Heart left ventricle (tissue), 16 donors: ENCODE measurements at regions of chr17 and their contacts with region 1.

Region 1: GRCh38 chr17:36629252-36629847 is 28.0 kb downstream of the MRM1 start:
- DNase-seq: peak; percentile 65 to 87 (median 69)
- ATAC-seq: peak; percentile 60 to 92 (median 88)
- H3K4me3 ChIP-seq: no peak overlapping the region
- H3K27ac ChIP-seq: no peak overlapping the region
- H3K4me1 ChIP-seq: peaks cover 0 to 12% (median 0%) of the 10 kb centered on the region in 12 donors
- H3K27me3 ChIP-seq: peaks cover 0 to 10% (median 4%) of the 10 kb centered on the region in 9 donors
- CTCF ChIP-seq: peak; percentile 93 to 99 (median 98)
- POLR2A ChIP-seq: no peak

Region 2: DNA sequence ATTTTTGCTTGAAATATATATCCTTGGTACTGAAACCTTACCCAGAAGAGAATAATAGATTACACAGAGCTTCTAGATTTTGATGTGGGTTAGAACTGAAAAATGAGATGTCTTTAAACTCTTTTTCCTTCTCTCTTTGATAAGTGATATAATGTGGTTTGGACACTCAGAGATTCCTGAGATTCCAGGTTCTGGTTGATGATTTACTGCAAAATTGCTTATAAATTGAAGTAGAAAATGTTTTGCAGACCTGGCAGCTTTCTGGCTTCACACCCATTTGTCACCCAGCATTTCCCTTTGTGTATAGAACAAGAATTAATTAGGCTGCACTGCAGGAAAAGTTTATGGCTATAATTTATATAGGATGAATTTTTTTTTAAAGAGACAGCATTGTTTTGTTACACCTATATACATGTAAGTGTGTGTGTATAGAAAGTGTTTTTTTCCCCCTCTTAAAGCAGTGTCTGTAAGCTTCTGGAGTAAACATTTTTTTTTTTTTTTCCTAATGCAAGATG is 342.9 kb after region 1 on chr17:
- intact Hi-C with region 1: no loop called
- DNase-seq: no peak
- ATAC-seq: no peak
- H3K4me3 ChIP-seq: no peak overlapping the region
- H3K27ac ChIP-seq: no peak overlapping the region
- H3K4me1 ChIP-seq: peaks cover 0 to 7% (median 0%) of the 10 kb centered on the region in 12 donors
- H3K27me3 ChIP-seq: no peaks in the 10 kb centered on the region
- CTCF ChIP-seq: no peak
- POLR2A ChIP-seq: no peak

Region 3: DNA sequence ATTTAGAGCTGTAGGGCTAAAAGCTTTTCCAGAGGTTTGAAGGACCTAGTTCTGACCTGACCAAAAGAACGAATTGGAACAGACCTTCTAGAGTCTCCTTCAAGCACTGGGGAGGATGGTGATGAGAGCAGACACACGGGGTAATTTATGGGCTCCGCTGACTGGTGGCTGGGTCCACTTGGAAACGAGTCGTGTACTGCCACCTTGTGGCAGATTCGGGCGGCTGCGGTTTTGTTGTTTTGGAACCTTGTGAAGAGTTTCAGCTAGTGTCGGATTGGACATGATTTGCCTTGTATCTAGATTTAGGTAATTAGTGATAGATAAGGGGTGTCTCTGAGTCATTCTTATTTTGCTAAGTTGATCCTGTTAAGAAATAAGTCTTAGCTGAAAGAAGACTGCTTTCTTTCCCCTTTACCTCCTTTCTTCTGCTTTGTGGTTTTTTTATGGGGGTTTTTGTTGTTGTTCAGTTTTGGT is 418.3 kb after region 1 on chr17:
- intact Hi-C with region 1: loop called (anchors 1 to 2 kb)
- DNase-seq: peak; percentile 64 to 82 (median 72)
- ATAC-seq: peak in 3 of 4 donors; percentile 60 to 75 (median 70)
- H3K4me3 ChIP-seq: no peak overlapping the region
- H3K27ac ChIP-seq: no peak overlapping the region
- H3K4me1 ChIP-seq: no peaks in the 10 kb centered on the region
- H3K27me3 ChIP-seq: no peaks in the 10 kb centered on the region
- CTCF ChIP-seq: peak; percentile 76 to 91 (median 84)
- POLR2A ChIP-seq: no peak

Region 4: DNA sequence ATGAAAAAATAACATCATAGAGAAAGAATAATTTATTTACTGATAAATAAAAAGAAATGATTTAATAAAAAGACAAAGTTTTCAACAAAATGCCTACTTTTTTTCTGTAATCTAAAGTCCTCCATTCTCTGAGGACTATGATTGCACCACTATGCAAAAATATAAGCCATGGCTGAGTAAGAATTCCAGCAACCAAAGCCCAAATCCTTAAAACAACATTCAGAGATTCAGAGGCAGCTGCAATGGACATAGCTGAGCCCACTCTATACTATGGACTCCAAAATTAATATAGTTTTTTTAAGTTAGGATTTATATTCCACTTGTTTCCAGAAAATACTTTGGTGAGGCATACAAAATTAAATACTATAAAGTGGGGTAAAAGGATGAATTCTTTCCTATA is 576.9 kb after region 1 on chr17:
- intact Hi-C with region 1: loop called in 1 of 10 experiments (anchors 10 kb)
- DNase-seq: no peak
- ATAC-seq: no peak
- H3K4me3 ChIP-seq: no peak overlapping the region
- H3K27ac ChIP-seq: no peak overlapping the region
- H3K4me1 ChIP-seq: no peaks in the 10 kb centered on the region
- H3K27me3 ChIP-seq: no peaks in the 10 kb centered on the region
- CTCF ChIP-seq: no peak
- POLR2A ChIP-seq: no peak

Region 5: DNA sequence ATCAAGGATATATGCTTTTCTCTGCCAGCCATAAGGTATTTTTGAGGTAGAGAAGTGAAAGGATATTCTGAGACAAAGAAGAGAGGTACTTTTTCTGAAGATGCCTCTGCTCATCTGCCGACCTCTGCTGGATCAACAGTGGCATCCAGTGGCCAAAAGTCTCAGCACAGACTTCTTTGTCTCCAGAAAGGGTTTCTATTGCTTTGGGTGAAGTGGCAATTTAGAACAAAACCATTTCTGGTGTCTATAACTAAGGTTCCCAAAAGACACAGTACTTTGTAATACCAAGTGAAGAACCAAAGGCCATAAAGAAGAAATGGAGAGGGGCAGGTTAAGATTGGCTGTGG is 591.2 kb after region 1 on chr17:
- intact Hi-C with region 1: loop called in 1 of 10 experiments (anchors 10 kb)
- DNase-seq: no peak
- ATAC-seq: no peak
- H3K4me3 ChIP-seq: no peak overlapping the region
- H3K27ac ChIP-seq: no peak overlapping the region
- H3K4me1 ChIP-seq: no peaks in the 10 kb centered on the region
- H3K27me3 ChIP-seq: no peaks in the 10 kb centered on the region
- CTCF ChIP-seq: peak in 7 of 12 donors; percentile 12 to 38 (median 26)
- POLR2A ChIP-seq: no peak

Region 6: DNA sequence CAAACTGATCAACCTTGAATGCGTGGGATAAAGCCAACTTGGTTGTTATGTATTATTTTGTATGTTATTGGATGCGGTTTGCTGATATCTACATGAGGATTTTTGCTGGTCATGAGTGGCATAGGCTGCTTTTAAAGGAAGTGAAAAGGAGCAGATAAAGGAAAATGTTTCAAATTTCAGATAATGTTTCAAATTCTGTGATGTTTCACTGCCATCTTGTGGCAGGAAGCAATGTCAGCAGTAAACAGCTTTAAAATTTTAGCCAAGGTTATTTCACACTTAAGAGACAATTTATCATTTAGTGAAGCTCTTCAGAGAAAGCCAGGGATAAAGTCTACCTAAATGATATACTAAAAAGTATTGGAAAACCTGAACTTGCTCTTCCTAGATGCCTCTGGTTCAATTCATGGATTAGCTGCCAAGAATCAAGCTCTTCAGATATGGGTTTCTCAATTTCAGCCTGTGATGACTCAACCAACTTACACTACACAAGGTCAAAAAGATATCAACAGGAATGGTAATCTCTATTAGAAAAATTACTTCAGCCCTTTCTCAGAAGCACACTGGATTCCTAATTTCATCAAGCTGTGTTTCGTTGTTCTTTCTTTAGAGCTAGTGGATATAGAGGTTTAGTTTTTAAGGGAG is 610.5 kb after region 1 on chr17:
- intact Hi-C with region 1: loop called (anchors 5 to 10 kb)
- DNase-seq: no peak
- ATAC-seq: peak in 2 of 4 donors; percentile 74 to 80
- H3K4me3 ChIP-seq: no peak overlapping the region
- H3K27ac ChIP-seq: peak overlapping the region in 1 of 12 donors; percentile 23
- H3K4me1 ChIP-seq: peaks cover 0 to 11% (median 0%) of the 10 kb centered on the region in 12 donors
- H3K27me3 ChIP-seq: no peaks in the 10 kb centered on the region
- CTCF ChIP-seq: peak; percentile 35 to 74 (median 57)
- POLR2A ChIP-seq: no peak

Region 7: GRCh38 chr17:37373530-37374159 is 744.3 kb after region 1 on chr17:
- intact Hi-C with region 1: loop called in 3 of 10 experiments (anchors 10 kb)
- DNase-seq: peak in 3 of 5 donors; percentile 32 to 49 (median 35)
- ATAC-seq: peak; percentile 67 to 94 (median 86)
- H3K4me3 ChIP-seq: no peak overlapping the region
- H3K27ac ChIP-seq: no peak overlapping the region
- H3K4me1 ChIP-seq: peaks cover 0 to 3% (median 0%) of the 10 kb centered on the region in 12 donors
- H3K27me3 ChIP-seq: no peaks in the 10 kb centered on the region
- CTCF ChIP-seq: peak; percentile 80 to 96 (median 86)
- POLR2A ChIP-seq: no peak